Heart left ventricle (tissue), 16 donors: ENCODE measurements at regions of chr4 and their contacts with region 1.

Region 1: GRCh38 chr4:46146993-46147392 is 23.1 kb upstream of the GABRG1 start:
- DNase-seq: no peak
- ATAC-seq: no peak
- H3K4me3 ChIP-seq: no peak overlapping the region
- H3K27ac ChIP-seq: no peak overlapping the region
- H3K4me1 ChIP-seq: no peaks in the 10 kb centered on the region
- H3K27me3 ChIP-seq: no peaks in the 10 kb centered on the region
- CTCF ChIP-seq: no peak
- POLR2A ChIP-seq: no peak

Region 2: DNA sequence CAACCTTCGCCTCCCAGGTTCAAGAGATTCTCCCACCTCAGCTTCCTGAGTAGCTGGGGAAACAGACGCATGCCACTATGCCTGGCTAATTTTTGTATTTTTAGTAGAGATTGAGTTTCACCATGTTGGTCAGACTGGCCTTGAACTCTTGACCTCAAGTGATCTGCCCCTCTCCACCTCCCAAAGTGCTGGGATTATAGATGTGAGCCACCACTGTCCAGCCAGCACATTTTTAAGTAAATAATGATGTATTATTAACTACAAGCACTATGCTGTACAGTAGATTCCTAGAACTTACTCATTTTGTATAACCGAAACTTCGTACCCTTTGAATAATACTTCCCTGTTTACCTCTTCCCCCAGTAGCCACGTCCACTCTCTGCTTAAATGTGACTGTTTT is 72.9 kb after region 1 on chr4:
- intact Hi-C with region 1: loop called in 1 of 10 experiments (anchors 2 kb)
- DNase-seq: no peak
- ATAC-seq: no peak
- H3K4me3 ChIP-seq: no peak overlapping the region
- H3K27ac ChIP-seq: no peak overlapping the region
- H3K4me1 ChIP-seq: no peaks in the 10 kb centered on the region
- H3K27me3 ChIP-seq: no peaks in the 10 kb centered on the region
- CTCF ChIP-seq: no peak
- POLR2A ChIP-seq: no peak

Region 3: GRCh38 chr4:46270986-46271596 is 124.1 kb after region 1 on chr4:
- intact Hi-C with region 1: no loop called
- DNase-seq: no peak
- ATAC-seq: no peak
- H3K4me3 ChIP-seq: no peak overlapping the region
- H3K27ac ChIP-seq: no peak overlapping the region
- H3K4me1 ChIP-seq: no peaks in the 10 kb centered on the region
- H3K27me3 ChIP-seq: peaks cover 0 to 7% (median 0%) of the 10 kb centered on the region in 9 donors
- CTCF ChIP-seq: peak in 11 of 12 donors; percentile 21 to 51 (median 37)
- POLR2A ChIP-seq: no peak

Region 4: GRCh38 chr4:46698891-46699290 is 551.9 kb after region 1 on chr4:
- intact Hi-C with region 1: no loop called
- DNase-seq: no peak
- ATAC-seq: peak in 1 of 4 donors; percentile 15
- H3K4me3 ChIP-seq: no peak overlapping the region
- H3K27ac ChIP-seq: no peak overlapping the region
- H3K4me1 ChIP-seq: no peaks in the 10 kb centered on the region
- H3K27me3 ChIP-seq: no peaks in the 10 kb centered on the region
- CTCF ChIP-seq: no peak
- POLR2A ChIP-seq: no peak

Region 5: GRCh38 chr4:47315346-47315745 is 1168.4 kb after region 1 on chr4:
- intact Hi-C with region 1: no loop called
- DNase-seq: no peak
- ATAC-seq: no peak
- H3K4me3 ChIP-seq: no peak overlapping the region
- H3K27ac ChIP-seq: no peak overlapping the region
- H3K4me1 ChIP-seq: no peaks in the 10 kb centered on the region
- H3K27me3 ChIP-seq: no peaks in the 10 kb centered on the region
- CTCF ChIP-seq: no peak
- POLR2A ChIP-seq: no peak